Activated CD4-positive, alpha-beta T cell treated with anti-CD3 and anti-CD28 coated beads for 36 hours (primary cell): ENCODE measurements at regions of chr4 and their contacts with region 1.

Region 1: DNA sequence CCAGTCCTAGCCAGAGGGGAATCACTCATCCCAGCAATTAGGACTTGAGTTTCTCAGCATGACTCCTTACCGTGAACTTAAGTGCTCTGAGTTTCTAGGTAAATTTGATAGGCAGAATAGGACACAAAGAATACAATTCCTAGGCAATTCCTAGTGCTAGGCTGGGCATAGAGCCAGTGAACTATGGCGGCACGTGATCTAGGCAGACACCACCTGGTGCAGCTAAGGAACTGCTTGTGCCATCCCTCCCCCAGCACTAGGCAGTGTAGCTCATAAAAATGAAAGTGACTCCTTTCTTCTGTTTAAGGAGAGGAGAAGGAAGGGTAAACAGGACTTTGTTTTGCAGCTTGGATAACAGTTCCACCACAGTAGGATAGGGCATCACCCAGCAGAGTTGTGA is 736.3 kb upstream of the PCDH7 start:
- DNase-seq: no peak
- ATAC-seq: no peak
- H3K4me3 Mint-ChIP-seq: no peak overlapping the region
- H3K27ac Mint-ChIP-seq: no peak overlapping the region
- H3K4me1 Mint-ChIP-seq: no peaks in the 10 kb centered on the region
- H3K27me3 Mint-ChIP-seq: no peaks in the 10 kb centered on the region

Region 2: DNA sequence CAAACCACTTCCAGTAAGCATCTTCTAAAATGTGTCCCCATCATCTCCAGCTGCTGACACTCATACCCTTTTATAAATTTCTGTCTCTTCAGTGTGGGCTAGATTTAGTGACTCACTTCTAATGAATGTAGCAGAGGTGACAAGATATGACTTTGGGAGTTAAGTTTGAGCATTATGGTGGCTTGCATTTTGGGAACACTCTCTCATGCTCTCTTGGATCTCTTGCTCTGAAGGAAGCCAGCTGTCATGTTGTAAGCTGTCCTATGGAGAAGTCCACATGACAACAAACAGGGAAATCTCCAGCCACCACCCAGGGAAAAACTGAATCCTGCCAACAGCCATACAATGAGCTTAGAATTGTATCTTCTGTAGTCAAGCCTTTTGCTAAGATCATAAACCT is 44.9 kb after region 1 on chr4:
- CTCF ChIA-PET with region 1: no interaction called
- POLR2A ChIA-PET with region 1: no interaction called
- intact Hi-C with region 1: loop called in 1 of 2 experiments (anchors 5 kb)
- DNase-seq: no peak
- ATAC-seq: no peak
- H3K4me3 Mint-ChIP-seq: no peak overlapping the region
- H3K27ac Mint-ChIP-seq: no peak overlapping the region
- H3K4me1 Mint-ChIP-seq: no peaks in the 10 kb centered on the region
- H3K27me3 Mint-ChIP-seq: no peaks in the 10 kb centered on the region